Activated CD8-positive, alpha-beta T cell treated with anti-CD3 and anti-CD28 coated beads for 36 hours (primary cell): ENCODE measurements at regions of chr2 and their contacts with region 1.

Region 1: GRCh38 chr2:31333527-31334183 is 80.9 kb downstream of the XDH start:
- DNase-seq: peak; percentile 87
- ATAC-seq: peak; percentile 95
- H3K4me3 Mint-ChIP-seq: no peak overlapping the region
- H3K27ac Mint-ChIP-seq: no peak overlapping the region
- H3K4me1 Mint-ChIP-seq: no peaks in the 10 kb centered on the region
- H3K27me3 Mint-ChIP-seq: no peaks in the 10 kb centered on the region
- CTCF ChIP-seq: peak; percentile 88

Region 2: GRCh38 chr2:30862054-30862651 is 471.5 kb before region 1 on chr2:
- CTCF ChIA-PET with region 1: interaction called, 11 read pairs
- POLR2A ChIA-PET with region 1: no interaction called
- intact Hi-C with region 1: loop called (anchors 10 kb)
- DNase-seq: peak; percentile 71
- ATAC-seq: peak; percentile 47
- H3K4me3 Mint-ChIP-seq: no peak overlapping the region
- H3K27ac Mint-ChIP-seq: no peak overlapping the region
- H3K4me1 Mint-ChIP-seq: no peaks in the 10 kb centered on the region
- H3K27me3 Mint-ChIP-seq: peaks cover 3% of the 10 kb centered on the region
- CTCF ChIP-seq: peak; percentile 92

Region 3: DNA sequence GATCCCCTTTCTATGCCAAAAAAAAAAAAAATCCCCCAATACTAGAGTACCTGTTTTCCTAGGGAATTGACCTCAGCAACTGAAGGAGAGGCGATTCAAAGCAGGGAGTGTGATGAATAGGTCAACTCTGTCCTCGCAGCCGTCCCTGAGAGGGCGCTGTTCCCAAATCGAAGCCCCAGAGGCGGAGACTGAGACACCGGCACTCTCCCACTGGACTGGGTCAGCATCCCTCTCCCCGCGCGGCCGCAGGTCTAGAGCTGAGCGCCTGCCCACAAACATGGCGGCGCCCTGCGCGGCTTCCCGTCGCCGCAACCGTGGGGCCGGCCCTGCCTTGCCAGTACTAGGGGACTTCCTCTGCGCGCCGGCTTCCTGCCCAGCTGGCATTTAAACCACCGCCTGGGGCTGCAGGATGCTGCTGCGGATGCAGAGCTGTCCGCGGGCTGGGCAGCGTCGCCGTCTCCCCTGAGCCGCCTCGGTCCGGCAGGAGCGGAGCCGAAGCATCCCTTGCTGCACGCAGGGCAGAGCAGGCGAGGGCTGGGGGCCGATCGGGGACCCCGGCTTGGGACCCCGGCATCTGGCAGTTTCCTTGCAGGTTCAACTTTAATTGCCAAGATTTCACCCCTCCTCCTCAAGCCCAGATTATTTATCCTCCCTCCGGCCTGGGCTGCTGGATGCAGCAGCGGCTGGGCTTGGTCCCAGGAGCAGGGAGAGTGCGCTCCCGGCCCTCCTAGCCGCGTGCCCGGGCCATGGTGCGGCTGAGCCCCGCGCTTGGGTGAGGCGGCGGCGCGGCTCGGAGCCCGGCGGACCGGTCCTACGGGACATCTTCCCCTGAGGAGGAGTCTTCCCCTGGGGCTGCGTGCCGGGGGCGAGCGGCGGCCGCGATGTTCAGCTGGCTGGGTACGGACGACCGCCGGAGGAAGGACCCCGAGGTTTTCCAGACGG is 99.6 kb before region 1 on chr2 and contains the start of gene EHD3:
- CTCF ChIA-PET with region 1: interaction called, 10 read pairs
- POLR2A ChIA-PET with region 1: no interaction called
- intact Hi-C with region 1: no loop called
- DNase-seq: peak; percentile 90
- ATAC-seq: peak; percentile 98
- H3K4me3 Mint-ChIP-seq: peak within 1 kb of the TSS; percentile 70
- H3K27ac Mint-ChIP-seq: no peak within 1 kb of the TSS
- H3K4me1 Mint-ChIP-seq: peaks cover 12% of the 10 kb centered on the region
- H3K27me3 Mint-ChIP-seq: no peaks in the 10 kb centered on the region
- CTCF ChIP-seq: peak; percentile 26
- total RNA-seq, gene EHD3: 0.54 to 0.60 TPM

Region 4: DNA sequence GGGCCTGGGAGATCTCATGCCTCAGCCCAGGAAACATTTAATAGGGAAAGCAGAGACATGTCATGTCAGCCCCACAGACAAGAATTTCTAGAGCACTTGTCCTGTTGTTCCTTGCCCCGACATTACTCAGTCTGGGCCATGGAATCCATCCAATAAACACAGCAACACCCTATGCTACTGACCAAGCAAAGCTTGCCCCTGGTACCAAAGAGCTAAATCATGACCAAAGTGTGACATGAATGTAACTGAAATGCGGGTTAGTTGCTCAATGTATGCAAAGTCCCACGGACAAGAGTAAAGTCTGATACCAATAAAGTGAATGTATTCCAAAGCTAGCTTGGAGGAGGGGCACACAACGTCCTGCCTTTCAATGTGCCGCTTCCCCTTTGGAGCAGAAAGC is 64.5 kb before region 1 on chr2:
- CTCF ChIA-PET with region 1: no interaction called
- POLR2A ChIA-PET with region 1: no interaction called
- intact Hi-C with region 1: no loop called
- DNase-seq: no peak
- ATAC-seq: no peak
- H3K4me3 Mint-ChIP-seq: no peak overlapping the region
- H3K27ac Mint-ChIP-seq: no peak overlapping the region
- H3K4me1 Mint-ChIP-seq: no peaks in the 10 kb centered on the region
- H3K27me3 Mint-ChIP-seq: peaks cover 2% of the 10 kb centered on the region
- CTCF ChIP-seq: no peak

Region 5: DNA sequence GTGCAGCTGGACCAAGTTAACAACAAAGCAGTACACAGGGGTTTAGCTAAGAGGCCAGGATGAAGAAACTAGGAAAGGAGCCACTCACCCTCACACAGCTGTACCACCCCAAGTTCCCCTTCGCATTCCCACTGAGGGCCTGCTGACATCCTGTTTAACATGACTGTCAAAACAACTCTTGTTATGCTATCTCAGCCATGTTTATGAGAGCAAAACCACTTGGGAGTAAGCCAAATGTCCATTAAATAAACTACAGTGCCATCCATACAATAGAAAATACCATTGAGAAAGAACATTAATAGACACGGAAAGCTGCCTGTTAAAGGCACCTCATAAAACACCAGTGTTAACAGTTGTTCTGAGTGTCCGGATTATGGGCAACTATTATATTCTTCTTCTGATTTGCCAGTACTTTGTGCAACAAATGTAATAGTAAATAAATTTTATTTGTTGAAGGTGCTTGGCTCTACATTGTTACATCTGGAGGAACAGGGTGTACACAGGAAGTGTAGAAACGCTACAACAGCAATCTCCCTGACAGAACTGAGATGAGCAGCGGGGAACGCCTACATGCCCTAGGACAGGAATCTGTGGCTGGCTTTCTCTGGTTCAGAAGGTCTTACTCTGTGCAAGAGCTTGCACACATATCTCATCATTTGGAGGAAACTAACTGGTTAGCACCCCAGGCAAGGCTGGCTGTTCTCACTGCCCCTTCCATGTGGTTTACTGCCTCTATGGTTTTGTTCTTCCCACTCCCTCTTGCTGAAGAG is 14.1 kb before region 1 on chr2:
- CTCF ChIA-PET with region 1: interaction called, 14 read pairs
- POLR2A ChIA-PET with region 1: no interaction called
- intact Hi-C with region 1: no loop called
- DNase-seq: peak; percentile 42
- ATAC-seq: peak; percentile 70
- H3K4me3 Mint-ChIP-seq: no peak overlapping the region
- H3K27ac Mint-ChIP-seq: peak overlapping the region; percentile 39
- H3K4me1 Mint-ChIP-seq: peaks cover 59% of the 10 kb centered on the region
- H3K27me3 Mint-ChIP-seq: no peaks in the 10 kb centered on the region
- CTCF ChIP-seq: no peak

Region 6: DNA sequence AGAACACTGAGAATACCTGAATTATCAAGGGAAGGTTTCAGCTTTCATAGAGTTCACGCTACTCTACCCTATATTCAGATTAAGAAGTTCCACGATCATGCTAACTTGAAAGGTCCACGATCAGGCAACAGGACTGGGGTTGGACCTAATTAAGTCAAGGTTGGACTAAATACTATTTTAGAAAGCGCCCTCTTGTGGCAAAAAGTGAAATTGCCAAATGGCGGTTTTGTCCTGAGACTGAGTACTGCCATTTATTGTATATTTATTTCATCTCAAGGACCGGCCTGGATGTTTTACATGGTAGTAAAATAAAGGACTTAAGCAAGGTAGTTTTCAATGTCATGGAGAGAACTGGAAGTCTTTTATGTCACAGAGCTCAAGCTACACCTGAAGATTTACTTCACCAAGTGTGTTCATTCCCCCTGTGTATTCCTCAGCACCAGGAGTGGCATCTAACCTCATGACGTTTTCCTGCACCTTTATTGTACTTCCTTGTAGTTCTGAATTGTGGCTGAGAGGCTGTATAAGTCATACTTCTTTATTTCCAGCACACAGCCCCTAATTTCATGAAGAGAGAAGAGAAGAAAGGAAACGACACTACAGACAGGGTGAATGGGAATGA is 190.3 kb after region 1 on chr2:
- CTCF ChIA-PET with region 1: interaction called, 10 read pairs
- POLR2A ChIA-PET with region 1: no interaction called
- intact Hi-C with region 1: no loop called
- DNase-seq: peak; percentile 74
- ATAC-seq: peak; percentile 30
- H3K4me3 Mint-ChIP-seq: no peak overlapping the region
- H3K27ac Mint-ChIP-seq: no peak overlapping the region
- H3K4me1 Mint-ChIP-seq: no peaks in the 10 kb centered on the region
- H3K27me3 Mint-ChIP-seq: peaks cover 24% of the 10 kb centered on the region
- CTCF ChIP-seq: peak; percentile 77